ENCODE measurements at regions of chr1 and their contacts with region 1.

Region 1: GRCh38 chr1:68120136-68120791 is 69.8 kb upstream of the DIRAS3 start:
- DNase-seq: peak; percentile 56
- H3K4me3 ChIP-seq: no peak overlapping the region; a peak in 1 of 4 replicates
- H3K27ac ChIP-seq: peak overlapping the region in 1 of 2 experiments; percentile 61; a peak in 1 of 4 replicates
- H3K4me1 ChIP-seq: peaks cover 0 to 4% of the 10 kb centered on the region in 2 experiments; a peak in 3 of 4 replicates
- H3K27me3 ChIP-seq: no peaks in the 10 kb centered on the region
- CTCF ChIP-seq: peak; percentile 88
- EP300 ChIP-seq: no peak
- RAD21 ChIP-seq: peak; percentile 95

Region 2: GRCh38 chr1:67853704-67854103 is 266.6 kb before region 1 on chr1:
- CTCF ChIA-PET with region 1: interaction called, 28 read pairs
- POLR2A ChIA-PET with region 1: no interaction called
- DNase-seq: peak; percentile 77
- H3K4me3 ChIP-seq: peak overlapping the region in 1 of 2 experiments; percentile 2; a peak in 1 of 4 replicates
- H3K27ac ChIP-seq: peak overlapping the region in 1 of 2 experiments; percentile 43; a peak in 2 of 4 replicates
- H3K4me1 ChIP-seq: peaks cover 4 to 10% of the 10 kb centered on the region in 2 experiments
- H3K27me3 ChIP-seq: no peaks in the 10 kb centered on the region
- CTCF ChIP-seq: peak; percentile 97
- EP300 ChIP-seq: no peak
- RAD21 ChIP-seq: peak; percentile 99

Region 3: DNA sequence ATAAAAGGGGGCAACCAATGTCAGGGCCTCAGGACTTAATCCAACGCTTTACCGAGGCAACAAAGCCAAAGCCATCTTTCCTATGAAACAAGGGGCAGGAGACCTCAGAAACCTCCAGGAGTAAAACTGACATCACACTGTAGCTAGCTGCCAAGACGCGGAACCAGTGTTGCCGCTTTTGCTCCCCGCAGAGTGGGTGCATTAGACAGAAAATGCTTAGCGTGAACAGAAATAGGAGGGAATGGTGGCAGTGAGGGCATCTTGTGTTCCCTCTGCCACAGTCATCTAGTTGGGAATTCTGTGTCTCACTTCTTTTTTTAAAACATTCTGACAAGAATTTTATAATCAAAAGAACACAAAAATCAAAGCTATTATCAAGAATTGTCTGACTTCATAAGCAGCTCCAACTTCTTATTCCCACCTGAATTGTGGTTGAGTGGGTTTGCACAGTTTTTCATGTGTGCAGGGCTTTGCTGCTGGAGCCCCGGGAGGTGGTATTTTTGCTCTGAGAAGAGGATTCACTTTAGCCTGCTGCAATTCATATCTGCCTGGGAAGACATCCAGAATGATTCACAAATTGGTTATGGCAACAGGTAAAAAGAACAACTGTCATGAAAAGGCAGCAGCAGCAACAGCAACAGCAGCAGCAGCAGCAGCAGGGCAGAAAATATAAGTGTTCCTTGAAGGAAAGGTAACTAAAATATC is 12.3 kb after region 1 on chr1:
- CTCF ChIA-PET with region 1: interaction called, 25 read pairs
- POLR2A ChIA-PET with region 1: no interaction called
- DNase-seq: no peak
- H3K4me3 ChIP-seq: no peak overlapping the region
- H3K27ac ChIP-seq: no peak overlapping the region
- H3K4me1 ChIP-seq: peaks cover 4 to 8% of the 10 kb centered on the region in 2 experiments; a peak in 1 of 4 replicates
- H3K27me3 ChIP-seq: no peaks in the 10 kb centered on the region
- CTCF ChIP-seq: no peak
- EP300 ChIP-seq: no peak
- RAD21 ChIP-seq: no peak

Region 4: GRCh38 chr1:68232354-68233148 is 112.3 kb after region 1 on chr1 and contains the start of gene WLS:
- CTCF ChIA-PET with region 1: interaction called, 12 read pairs
- POLR2A ChIA-PET with region 1: interaction called, 3 read pairs
- DNase-seq: peak; percentile 81
- H3K4me3 ChIP-seq: peak within 1 kb of the TSS; percentile 87 to 89
- H3K27ac ChIP-seq: peak within 1 kb of the TSS; percentile 69 to 74
- H3K4me1 ChIP-seq: peaks cover 12 to 16% of the 10 kb centered on the region in 2 experiments; a peak in 3 of 4 replicates
- H3K27me3 ChIP-seq: no peaks in the 10 kb centered on the region
- CTCF ChIP-seq: peak; percentile 21; the same call in 1 of the 2 replicates
- EP300 ChIP-seq: no peak
- RAD21 ChIP-seq: no peak
- polyA plus RNA-seq, gene WLS: 69.0 and 73.7 TPM in 2 replicates

Region 5: GRCh38 chr1:68321084-68321685 is 200.9 kb after region 1 on chr1:
- CTCF ChIA-PET with region 1: interaction called, 101 read pairs
- POLR2A ChIA-PET with region 1: no interaction called
- DNase-seq: peak; percentile 37
- H3K4me3 ChIP-seq: no peak overlapping the region
- H3K27ac ChIP-seq: no peak overlapping the region
- H3K4me1 ChIP-seq: peaks cover 0 to 14% of the 10 kb centered on the region in 2 experiments; a peak in 1 of 4 replicates
- H3K27me3 ChIP-seq: no peaks in the 10 kb centered on the region
- CTCF ChIP-seq: peak; percentile 66
- EP300 ChIP-seq: no peak
- RAD21 ChIP-seq: peak; percentile 61

Region 6: GRCh38 chr1:68346188-68346808 is 226.0 kb after region 1 on chr1:
- CTCF ChIA-PET with region 1: interaction called, 477 read pairs
- POLR2A ChIA-PET with region 1: no interaction called
- DNase-seq: peak; percentile 19
- H3K4me3 ChIP-seq: no peak overlapping the region
- H3K27ac ChIP-seq: no peak overlapping the region
- H3K4me1 ChIP-seq: peaks cover 0 to 3% of the 10 kb centered on the region in 2 experiments; a peak in 1 of 4 replicates
- H3K27me3 ChIP-seq: no peaks in the 10 kb centered on the region
- CTCF ChIP-seq: peak; percentile 67
- EP300 ChIP-seq: no peak
- RAD21 ChIP-seq: peak; percentile 59

Region 7: DNA sequence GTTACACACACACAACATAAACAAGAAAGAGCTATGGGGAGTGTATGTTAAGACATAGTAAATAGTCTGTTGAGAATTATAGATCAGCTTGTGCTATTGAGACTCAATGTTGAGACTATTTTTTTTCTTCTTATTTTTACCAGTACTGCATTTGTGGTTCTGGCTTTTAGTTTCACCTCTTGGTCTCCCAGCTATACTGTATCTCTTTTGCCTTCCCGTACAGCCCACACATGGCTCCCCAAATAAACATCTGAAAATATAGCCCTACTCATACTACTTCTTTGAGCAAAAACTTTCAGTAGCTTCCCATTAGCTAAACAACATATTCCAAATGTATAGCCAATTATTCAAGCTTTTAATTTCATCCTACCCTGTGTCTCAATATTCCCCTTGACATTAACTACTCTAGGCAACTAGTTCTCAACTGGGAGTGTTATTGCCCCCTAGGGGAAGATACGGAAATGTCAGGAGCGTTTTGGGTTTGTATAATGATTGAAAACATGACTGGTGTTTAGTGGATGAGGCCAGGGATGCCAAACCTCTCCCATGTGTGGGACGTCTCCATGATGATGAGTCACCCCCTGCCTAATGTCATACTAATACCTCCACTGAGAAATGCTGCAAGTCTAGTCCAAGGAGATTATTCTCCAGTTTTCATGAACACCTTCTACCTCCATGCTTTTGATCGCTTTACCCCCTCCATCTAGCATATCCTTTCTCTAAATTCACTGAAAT is 322.7 kb after region 1 on chr1:
- CTCF ChIA-PET with region 1: interaction called, 12 read pairs
- POLR2A ChIA-PET with region 1: no interaction called
- DNase-seq: peak; percentile 44
- H3K4me3 ChIP-seq: no peak overlapping the region
- H3K27ac ChIP-seq: no peak overlapping the region
- H3K4me1 ChIP-seq: no peaks in the 10 kb centered on the region
- H3K27me3 ChIP-seq: no peaks in the 10 kb centered on the region
- CTCF ChIP-seq: peak; percentile 76
- EP300 ChIP-seq: peak; percentile 15 to 32; a peak in 1 of 4 replicates
- RAD21 ChIP-seq: peak; percentile 58

Measured in SK-N-SH (cell line).